PC-3 (cell line): ENCODE measurements at regions of chr9 and their contacts with region 1.

Region 1: DNA sequence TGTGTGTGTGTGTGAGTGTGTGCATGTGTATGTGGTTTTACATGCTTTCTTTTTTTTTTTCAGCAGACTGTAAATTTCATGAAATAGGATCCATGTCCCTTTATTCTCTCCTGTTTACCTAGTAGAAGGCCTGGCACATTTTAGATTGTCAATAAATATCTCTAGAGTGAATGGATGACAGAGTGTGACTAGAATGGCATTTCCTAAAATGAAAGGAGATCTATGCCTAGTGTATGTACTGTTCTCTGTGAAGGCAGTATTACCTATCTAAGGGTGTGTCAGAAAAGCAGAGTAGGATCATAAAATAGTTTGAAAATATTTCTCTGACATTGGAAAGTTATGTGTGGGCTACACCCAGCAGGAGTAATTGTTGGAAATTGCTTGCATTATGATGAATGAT is 1876.0 kb upstream of the C9orf72 start:
- DNase-seq: peak; percentile 80
- ATAC-seq: peak; percentile 96
- H3K4me3 ChIP-seq: peak overlapping the region; percentile 75
- H3K27ac ChIP-seq: peak overlapping the region; percentile 39
- H3K4me1 ChIP-seq: peaks cover 17% of the 10 kb centered on the region
- H3K27me3 ChIP-seq: no peaks in the 10 kb centered on the region
- CTCF ChIP-seq: no peak

Region 2: GRCh38 chr9:29416204-29416603 is 33.1 kb before region 1 on chr9:
- CTCF ChIA-PET with region 1: no interaction called
- POLR2A ChIA-PET with region 1: no interaction called
- intact Hi-C with region 1: loop called (anchors 5 kb)
- DNase-seq: peak; percentile 54
- ATAC-seq: peak; percentile 56
- H3K4me3 ChIP-seq: peak overlapping the region; percentile 25; the same call in 1 of the 2 replicates
- H3K27ac ChIP-seq: peak overlapping the region; percentile 92
- H3K4me1 ChIP-seq: peaks cover 44% of the 10 kb centered on the region
- H3K27me3 ChIP-seq: no peaks in the 10 kb centered on the region
- CTCF ChIP-seq: no peak